ENCODE measurements at regions of chr17 and their contacts with region 1.

Region 1: DNA sequence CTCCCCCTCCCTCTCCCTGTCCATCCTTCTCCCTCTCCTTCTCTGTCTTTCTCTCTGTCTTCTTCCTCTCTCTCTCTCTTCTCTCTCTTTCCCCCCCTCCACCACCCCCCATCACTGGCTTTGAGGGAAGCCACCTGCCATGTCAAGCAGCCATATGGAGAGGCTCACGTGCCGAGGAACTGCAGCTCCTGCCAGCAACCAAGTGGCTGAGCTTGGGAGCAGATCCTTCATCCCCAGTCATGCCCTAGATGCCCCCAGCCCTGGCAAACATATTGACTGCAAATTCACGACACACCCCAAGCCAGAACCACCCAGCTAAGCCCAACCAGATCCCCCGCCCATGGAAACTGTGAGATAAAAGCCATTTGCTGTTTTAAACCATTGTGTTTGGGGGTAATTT is 40.9 kb upstream of the RBFOX3 start:
- DNase-seq: no peak
- H3K4me3 ChIP-seq: no peak overlapping the region
- H3K27ac ChIP-seq: no peak overlapping the region
- H3K4me1 ChIP-seq: no peaks in the 10 kb centered on the region
- H3K27me3 ChIP-seq: no peaks in the 10 kb centered on the region
- CTCF ChIP-seq: no peak

Region 2: GRCh38 chr17:79552405-79552804 is 99.4 kb before region 1 on chr17:
- CTCF ChIA-PET with region 1: no interaction called
- dilution Hi-C with region 1: loop called (anchors 5 kb)
- in situ Hi-C with region 1: no loop called
- intact Hi-C with region 1: no loop called
- DNase-seq: no peak
- H3K4me3 ChIP-seq: no peak overlapping the region
- H3K27ac ChIP-seq: no peak overlapping the region
- H3K4me1 ChIP-seq: no peaks in the 10 kb centered on the region
- H3K27me3 ChIP-seq: no peaks in the 10 kb centered on the region
- CTCF ChIP-seq: no peak

Region 3: GRCh38 chr17:79612468-79613194 is 39.1 kb before region 1 on chr17:
- CTCF ChIA-PET with region 1: no interaction called
- dilution Hi-C with region 1: loop called (anchors 5 kb)
- in situ Hi-C with region 1: no loop called
- intact Hi-C with region 1: no loop called
- DNase-seq: peak; percentile 29
- H3K4me3 ChIP-seq: no peak overlapping the region
- H3K27ac ChIP-seq: no peak overlapping the region
- H3K4me1 ChIP-seq: no peaks in the 10 kb centered on the region
- H3K27me3 ChIP-seq: peaks cover 19% of the 10 kb centered on the region
- CTCF ChIP-seq: peak; percentile 62 to 74

Measured in mammary epithelial cell (primary cell).